PC-9 (cell line): ENCODE measurements at regions of chr16 and their contacts with region 1.

Region 1: GRCh38 chr16:483341-484075 is 44.0 kb upstream of the CAPN15 start:
- DNase-seq: no peak
- H3K4me3 ChIP-seq: no peak overlapping the region
- H3K27ac ChIP-seq: no peak overlapping the region
- H3K4me1 ChIP-seq: no peaks in the 10 kb centered on the region
- H3K27me3 ChIP-seq: no peaks in the 10 kb centered on the region
- CTCF ChIP-seq: no peak

Region 2: DNA sequence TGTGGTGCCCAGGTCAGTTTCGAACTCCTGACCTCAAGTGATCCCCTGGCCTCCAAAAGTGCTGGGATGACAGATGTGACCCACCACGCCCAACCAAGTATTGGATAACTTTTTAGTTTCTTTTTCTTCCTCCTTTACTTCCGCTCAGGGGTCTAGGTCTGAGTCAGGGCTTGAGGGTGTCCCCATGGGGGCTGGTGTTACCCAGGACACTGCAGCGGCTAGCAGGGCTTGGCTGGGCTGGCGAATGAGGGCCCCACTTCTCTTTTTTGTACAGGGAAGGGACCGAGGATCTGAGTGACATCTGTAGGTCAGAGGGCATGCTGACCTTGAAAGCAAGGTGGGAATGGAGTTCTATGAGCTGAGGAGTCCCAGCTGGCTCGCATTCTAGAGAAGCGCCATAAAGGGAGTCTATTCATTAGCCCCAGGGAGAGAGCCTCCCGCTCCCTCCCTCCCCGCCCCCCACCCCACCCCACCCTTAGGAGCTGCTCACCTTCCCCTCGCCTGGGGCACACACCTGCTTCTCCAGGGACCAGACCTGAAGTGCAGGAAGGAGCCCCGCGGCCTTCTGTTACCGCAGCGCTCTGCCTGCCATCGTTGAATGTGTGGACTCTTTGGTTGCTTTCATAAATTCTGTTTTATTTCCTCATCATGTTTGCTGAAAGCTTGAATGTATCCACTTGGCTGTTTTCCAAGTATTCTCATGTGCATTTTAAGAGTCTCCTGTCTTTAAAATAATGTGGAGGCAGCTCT is 32.9 kb before region 1 on chr16:
- CTCF ChIA-PET with region 1: no interaction called
- POLR2A ChIA-PET with region 1: interaction called, 10 read pairs
- intact Hi-C with region 1: no loop called
- DNase-seq: peak in 1 of 2 experiments; percentile 42
- H3K4me3 ChIP-seq: no peak overlapping the region
- H3K27ac ChIP-seq: no peak overlapping the region
- H3K4me1 ChIP-seq: no peaks in the 10 kb centered on the region
- H3K27me3 ChIP-seq: no peaks in the 10 kb centered on the region
- CTCF ChIP-seq: no peak